ENCODE measurements at regions of chr1 and their contacts with region 1.

Region 1: GRCh38 chr1:119613769-119614720 is 34.0 kb downstream of the ZNF697 start:
- DNase-seq: peak; percentile 75 to 90 (median 84)
- ATAC-seq: peak; percentile 81 to 92 (median 88)
- H3K4me3 ChIP-seq: no peak overlapping the region
- H3K27ac ChIP-seq: no peak overlapping the region
- H3K4me1 ChIP-seq: peaks cover 8 to 12% (median 8%) of the 10 kb centered on the region in 3 donors
- H3K27me3 ChIP-seq: no peaks in the 10 kb centered on the region
- CTCF ChIP-seq: peak; percentile 59 to 77 (median 74)

Region 2: DNA sequence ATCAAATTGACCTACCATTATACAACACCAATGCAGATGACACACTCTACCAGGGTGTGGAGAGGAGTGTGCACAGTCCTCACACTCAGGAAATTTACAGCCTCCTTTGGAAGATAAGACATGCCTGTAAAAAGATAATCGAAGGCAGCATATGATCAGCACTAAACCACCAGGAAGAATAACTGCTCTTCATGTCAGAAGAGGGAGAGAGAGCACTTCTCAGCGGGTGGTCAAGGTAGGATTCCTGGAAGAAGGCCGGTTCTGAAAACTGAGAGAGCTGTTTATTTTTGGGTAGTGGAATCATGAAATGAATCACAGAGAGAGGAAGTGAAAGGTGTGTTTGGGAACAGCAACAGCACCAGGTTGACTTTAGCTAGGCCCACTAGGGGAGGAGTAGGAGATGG is 48.0 kb after region 1 on chr1:
- intact Hi-C with region 1: loop called in 2 of 3 experiments (anchors 5 kb)
- DNase-seq: no peak
- ATAC-seq: no peak
- H3K4me3 ChIP-seq: no peak overlapping the region
- H3K27ac ChIP-seq: no peak overlapping the region
- H3K4me1 ChIP-seq: peaks cover 18 to 23% (median 20%) of the 10 kb centered on the region in 3 donors
- H3K27me3 ChIP-seq: no peaks in the 10 kb centered on the region
- CTCF ChIP-seq: no peak

Region 3: GRCh38 chr1:119667173-119667572 is 53.1 kb after region 1 on chr1:
- intact Hi-C with region 1: loop called in 2 of 3 experiments (anchors 5 kb)
- DNase-seq: no peak
- ATAC-seq: no peak
- H3K4me3 ChIP-seq: no peak overlapping the region
- H3K27ac ChIP-seq: no peak overlapping the region
- H3K4me1 ChIP-seq: peaks cover 0 to 4% (median 0%) of the 10 kb centered on the region in 3 donors
- H3K27me3 ChIP-seq: no peaks in the 10 kb centered on the region
- CTCF ChIP-seq: no peak

Measured in pancreas (tissue), 10 donors.